RWPE1 (cell line): ENCODE measurements at regions of chr20 and their contacts with region 1.

Region 1: DNA sequence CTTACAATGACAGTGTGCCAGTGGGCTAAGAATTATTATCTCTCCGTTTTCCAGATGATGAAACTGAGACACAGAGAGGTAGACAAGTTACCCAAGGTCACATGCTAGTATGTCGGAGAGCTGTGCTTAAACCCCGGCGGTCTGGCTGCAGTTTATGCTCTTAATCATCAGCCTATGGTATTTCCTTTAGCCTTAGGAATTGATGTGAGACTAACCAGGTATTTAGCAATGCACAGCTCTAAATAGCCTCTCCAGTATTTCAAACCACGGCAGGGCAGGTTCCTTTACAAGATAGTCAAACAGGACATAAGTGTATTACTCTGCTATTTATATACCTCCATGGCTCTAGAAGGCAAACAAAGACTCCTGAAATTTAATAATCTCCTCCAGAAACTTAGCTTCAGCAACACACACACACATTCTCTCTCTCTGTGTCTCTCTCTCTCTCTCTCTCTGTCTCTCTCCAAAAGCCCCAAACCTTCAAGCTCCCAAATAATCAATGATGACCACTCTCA is 142.0 kb upstream of the ZNF217 start:
- DNase-seq: peak; percentile 96
- H3K27ac ChIP-seq: peak overlapping the region; percentile 72
- CTCF ChIP-seq: no peak

Region 2: DNA sequence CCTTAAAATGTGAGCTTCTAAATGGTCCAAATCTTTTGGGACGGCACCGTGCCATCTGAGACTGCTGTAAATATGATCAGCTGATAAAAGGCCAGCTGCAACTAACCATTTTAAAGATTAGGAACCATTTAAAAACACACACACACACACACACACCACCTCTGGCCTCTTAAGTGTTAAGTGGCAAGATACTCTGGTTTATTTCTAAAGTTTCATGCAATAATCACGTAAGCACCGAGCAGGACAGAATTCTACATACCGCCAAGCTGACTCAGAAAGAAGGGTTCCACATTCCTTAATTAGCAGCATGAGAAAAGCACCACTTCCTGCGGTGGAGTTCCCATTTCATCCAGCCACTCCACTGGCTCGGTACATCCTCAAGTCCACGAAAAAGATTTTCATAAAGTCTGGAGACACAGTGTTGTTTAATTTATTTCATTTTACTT is 124.1 kb before region 1 on chr20:
- CTCF ChIA-PET with region 1: interaction called, 4 read pairs
- POLR2A ChIA-PET with region 1: interaction called, 11 read pairs
- DNase-seq: peak; percentile 94
- H3K27ac ChIP-seq: no peak overlapping the region
- CTCF ChIP-seq: no peak

Region 3: DNA sequence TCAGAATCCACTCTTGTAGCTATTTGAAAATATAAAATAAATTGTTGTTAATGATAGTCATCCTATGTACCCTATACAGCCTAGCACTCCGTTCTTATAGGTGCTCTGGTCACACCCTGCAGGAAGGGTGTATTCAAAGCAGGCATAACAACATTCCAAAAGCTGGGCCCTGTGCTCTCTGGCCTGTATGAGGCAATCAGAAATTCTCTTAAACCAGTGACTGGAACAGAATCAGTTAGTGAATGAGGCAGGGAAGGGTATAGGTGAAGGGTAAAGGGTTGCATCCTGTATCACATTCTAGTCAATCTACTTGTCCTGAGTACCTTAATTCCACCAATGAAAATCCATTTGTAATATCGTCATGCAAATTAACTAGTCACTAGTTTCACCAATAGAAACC is 12.6 kb after region 1 on chr20:
- CTCF ChIA-PET with region 1: interaction called, 3 read pairs
- POLR2A ChIA-PET with region 1: interaction called, 12 read pairs
- DNase-seq: peak; percentile 81
- H3K27ac ChIP-seq: no peak overlapping the region
- CTCF ChIP-seq: no peak

Region 4: GRCh38 chr20:53995949-53996348 is 260.4 kb after region 1 on chr20:
- CTCF ChIA-PET with region 1: no interaction called
- POLR2A ChIA-PET with region 1: no interaction called
- DNase-seq: no peak
- H3K27ac ChIP-seq: no peak overlapping the region
- CTCF ChIP-seq: no peak